CD14-positive monocyte (primary cell): ENCODE measurements at regions of chr5 and their contacts with region 1.

Region 1: GRCh38 chr5:103475629-103476240 is 86.9 kb downstream of the NUDT12 start:
- DNase-seq: peak in 2 of 3 donors; percentile 9 to 12
- H3K4me3 ChIP-seq: no peak overlapping the region
- H3K4me3 Mint-ChIP-seq: no peak overlapping the region
- H3K27ac ChIP-seq: no peak overlapping the region
- H3K27ac Mint-ChIP-seq: no peak overlapping the region
- H3K4me1 ChIP-seq: peaks cover 6 to 12% of the 10 kb centered on the region in 2 donors
- H3K4me1 Mint-ChIP-seq: peaks cover 6% of the 10 kb centered on the region
- H3K27me3 ChIP-seq: no peaks in the 10 kb centered on the region
- H3K27me3 Mint-ChIP-seq: no peaks in the 10 kb centered on the region
- CTCF ChIP-seq: peak; percentile 79

Region 2: DNA sequence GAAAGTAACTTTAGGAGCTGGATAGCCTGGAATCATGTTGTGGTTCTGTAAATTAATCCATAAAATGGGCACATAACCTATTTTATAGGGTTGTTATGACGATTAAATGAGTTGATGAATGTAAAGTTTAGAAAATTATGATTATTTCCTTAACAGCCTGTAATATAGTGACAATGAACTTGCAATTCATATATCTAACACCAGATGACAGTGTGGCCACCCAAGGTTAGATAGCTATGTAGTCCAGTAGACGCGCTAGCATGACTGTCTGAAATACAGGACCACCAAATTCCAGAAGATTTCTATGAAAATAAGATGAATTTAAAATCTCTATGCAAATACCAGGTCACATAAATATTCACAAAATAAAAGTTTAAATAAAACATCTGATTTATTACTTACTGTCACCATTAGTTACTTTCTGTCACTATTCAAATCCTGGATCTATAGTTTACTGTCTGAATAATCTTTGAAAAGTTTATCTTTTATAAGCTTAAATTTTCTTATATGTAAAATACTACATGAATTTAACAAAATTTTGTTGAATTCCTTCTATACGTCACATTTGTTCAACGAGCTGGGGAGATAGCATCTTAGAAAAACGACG is 243.2 kb before region 1 on chr5:
- intact Hi-C with region 1: loop called (anchors 5 to 10 kb)
- DNase-seq: peak; percentile 7 to 24 (median 22)
- H3K4me3 ChIP-seq: no peak overlapping the region
- H3K4me3 Mint-ChIP-seq: no peak overlapping the region
- H3K27ac ChIP-seq: no peak overlapping the region
- H3K27ac Mint-ChIP-seq: no peak overlapping the region
- H3K4me1 ChIP-seq: no peaks in the 10 kb centered on the region
- H3K4me1 Mint-ChIP-seq: peaks cover 12% of the 10 kb centered on the region
- H3K27me3 ChIP-seq: no peaks in the 10 kb centered on the region
- H3K27me3 Mint-ChIP-seq: no peaks in the 10 kb centered on the region
- CTCF ChIP-seq: peak; percentile 80

Region 3: DNA sequence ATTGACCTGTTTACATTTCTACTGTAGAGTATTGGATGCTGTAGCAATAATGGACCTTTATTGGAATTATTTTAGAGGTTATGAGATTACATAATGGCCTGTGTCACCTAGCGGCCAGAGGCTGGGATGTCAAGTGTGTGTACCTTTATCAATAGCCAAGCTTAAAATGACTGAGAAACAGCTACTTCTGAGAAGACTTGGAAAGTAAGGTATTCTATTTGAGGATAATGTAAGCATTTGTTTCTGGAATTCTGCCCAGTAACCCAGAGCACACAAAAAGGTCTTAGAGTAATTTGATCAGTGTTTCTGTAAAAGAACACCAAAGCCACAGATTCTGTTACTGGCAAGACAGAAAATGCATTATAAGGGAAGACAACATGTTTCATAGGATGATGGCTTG is 100.4 kb before region 1 on chr5:
- intact Hi-C with region 1: no loop called
- DNase-seq: no peak
- H3K4me3 ChIP-seq: no peak overlapping the region
- H3K4me3 Mint-ChIP-seq: no peak overlapping the region
- H3K27ac ChIP-seq: no peak overlapping the region
- H3K27ac Mint-ChIP-seq: peak overlapping the region in 1 of 7 donors; percentile 68
- H3K4me1 ChIP-seq: no peaks in the 10 kb centered on the region
- H3K4me1 Mint-ChIP-seq: peaks cover 5% of the 10 kb centered on the region
- H3K27me3 ChIP-seq: no peaks in the 10 kb centered on the region
- H3K27me3 Mint-ChIP-seq: peaks cover 0 to 2% (median 0%) of the 10 kb centered on the region in 3 donors
- CTCF ChIP-seq: no peak

Region 4: GRCh38 chr5:103793595-103794182 is 318.0 kb after region 1 on chr5:
- intact Hi-C with region 1: no loop called
- DNase-seq: no peak
- H3K4me3 ChIP-seq: no peak overlapping the region
- H3K4me3 Mint-ChIP-seq: no peak overlapping the region
- H3K27ac ChIP-seq: no peak overlapping the region
- H3K27ac Mint-ChIP-seq: no peak overlapping the region
- H3K4me1 ChIP-seq: no peaks in the 10 kb centered on the region
- H3K4me1 Mint-ChIP-seq: no peaks in the 10 kb centered on the region
- H3K27me3 ChIP-seq: no peaks in the 10 kb centered on the region
- H3K27me3 Mint-ChIP-seq: peaks cover 0 to 2% (median 0%) of the 10 kb centered on the region in 3 donors
- CTCF ChIP-seq: no peak